Psoas muscle (tissue), 8 donors: ENCODE measurements at regions of chr3 and their contacts with region 1.

Region 1: GRCh38 chr3:151276687-151277042 is 1.7 kb downstream of the P2RY14 start:
- DNase-seq: no peak
- ATAC-seq: no peak
- H3K4me3 ChIP-seq: no peak overlapping the region
- H3K27ac ChIP-seq: no peak overlapping the region
- H3K4me1 ChIP-seq: no peaks in the 10 kb centered on the region
- H3K27me3 ChIP-seq: no peaks in the 10 kb centered on the region
- CTCF ChIP-seq: no peak

Region 2: DNA sequence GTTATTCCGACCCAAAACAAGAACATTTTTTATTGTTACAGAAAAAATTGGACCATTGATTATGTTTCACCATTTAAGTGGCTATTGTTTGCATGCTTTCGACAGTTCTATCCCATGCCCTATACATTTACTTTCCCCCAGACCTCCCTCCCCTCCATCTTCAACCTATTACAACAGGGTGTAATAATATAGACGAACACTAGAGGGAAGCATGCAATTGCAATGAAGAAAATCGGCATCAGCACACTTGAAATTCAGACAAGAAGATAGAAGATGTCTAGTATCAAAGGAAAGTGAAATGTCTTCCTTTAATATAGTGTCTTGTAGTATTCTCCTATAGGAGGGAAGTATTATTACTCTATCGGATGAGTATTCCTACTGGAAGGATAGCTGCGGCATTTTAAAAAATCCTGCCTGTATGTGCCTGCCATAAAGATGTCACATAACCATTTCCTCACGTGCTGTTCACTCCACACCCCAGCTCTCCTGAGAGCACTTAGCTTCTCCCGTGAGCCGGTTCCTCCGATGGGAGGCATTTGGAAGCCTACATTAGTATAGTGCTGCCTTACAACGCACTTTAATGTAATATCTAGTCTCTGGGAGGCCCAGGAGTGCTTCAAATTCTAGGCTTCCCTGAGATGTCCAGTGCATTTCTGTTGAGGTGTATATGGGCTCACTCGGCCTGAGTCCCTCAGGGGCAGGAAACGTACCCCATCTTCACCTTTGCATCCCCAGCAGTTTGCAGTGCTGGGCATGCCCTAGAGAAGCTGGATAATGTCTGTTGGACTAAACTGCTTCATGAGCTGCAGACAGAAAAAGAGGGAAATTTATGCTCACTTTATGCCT is 555.2 kb before region 1 on chr3:
- intact Hi-C with region 1: loop called in 1 of 2 experiments (anchors 10 kb)
- DNase-seq: no peak
- ATAC-seq: peak; percentile 65 to 93 (median 77)
- H3K4me3 ChIP-seq: no peak overlapping the region
- H3K27ac ChIP-seq: no peak overlapping the region
- H3K4me1 ChIP-seq: no peaks in the 10 kb centered on the region
- H3K27me3 ChIP-seq: no peaks in the 10 kb centered on the region
- CTCF ChIP-seq: peak; percentile 87